CD8-positive, alpha-beta T cell (primary cell): ENCODE measurements at regions of chr9 and their contacts with region 1.

Region 1: DNA sequence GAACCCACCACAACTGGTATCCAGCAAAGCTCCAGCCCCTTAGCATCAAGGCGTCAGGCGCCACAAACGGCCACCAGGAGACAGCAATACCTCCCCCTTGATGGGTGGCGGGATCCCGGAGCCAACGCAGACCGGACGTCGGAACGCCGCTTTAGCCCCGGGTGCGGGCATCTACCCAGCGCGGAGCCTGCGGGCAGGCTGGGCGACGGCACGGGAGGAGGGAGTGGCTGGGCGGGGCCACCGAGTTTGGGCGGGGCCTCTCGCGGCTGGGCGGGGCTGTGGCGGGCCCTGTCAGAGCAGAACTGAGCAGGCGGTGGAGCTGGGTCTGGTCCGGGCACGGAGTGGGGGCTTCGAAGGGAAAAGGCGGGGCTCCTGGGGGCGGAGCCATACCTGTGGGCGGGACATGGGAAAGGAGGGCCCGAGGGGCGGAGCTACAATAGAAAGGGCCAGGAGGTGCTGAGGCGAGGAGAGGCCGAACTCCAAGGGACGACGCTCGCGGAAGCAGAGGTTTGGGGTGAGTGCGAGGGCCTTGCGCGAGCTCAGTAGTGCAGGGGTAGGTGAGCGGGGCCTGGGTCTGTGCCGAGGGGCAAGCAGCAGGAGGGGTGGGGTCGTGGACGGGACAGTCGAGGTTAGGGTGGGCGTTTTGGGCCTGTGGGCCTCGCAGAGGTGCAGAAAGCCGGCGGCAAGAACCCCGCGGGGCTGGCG is 40.2 kb upstream of the GARNL3 start:
- DNase-seq: peak; percentile 75 to 91 (median 89)
- ATAC-seq: peak; percentile 82
- H3K4me3 ChIP-seq: peak overlapping the region; percentile 66 to 72
- H3K4me3 Mint-ChIP-seq: peak overlapping the region; percentile 82
- H3K27ac ChIP-seq: peak overlapping the region in 1 of 2 experiments; percentile 53
- H3K27ac Mint-ChIP-seq: peak overlapping the region; percentile 77
- H3K4me1 ChIP-seq: peaks cover 33% of the 10 kb centered on the region
- H3K4me1 Mint-ChIP-seq: peaks cover 42% of the 10 kb centered on the region
- H3K27me3 ChIP-seq: no peaks in the 10 kb centered on the region
- H3K27me3 Mint-ChIP-seq: peaks cover 2% of the 10 kb centered on the region
- CTCF ChIP-seq: no peak

Region 2: DNA sequence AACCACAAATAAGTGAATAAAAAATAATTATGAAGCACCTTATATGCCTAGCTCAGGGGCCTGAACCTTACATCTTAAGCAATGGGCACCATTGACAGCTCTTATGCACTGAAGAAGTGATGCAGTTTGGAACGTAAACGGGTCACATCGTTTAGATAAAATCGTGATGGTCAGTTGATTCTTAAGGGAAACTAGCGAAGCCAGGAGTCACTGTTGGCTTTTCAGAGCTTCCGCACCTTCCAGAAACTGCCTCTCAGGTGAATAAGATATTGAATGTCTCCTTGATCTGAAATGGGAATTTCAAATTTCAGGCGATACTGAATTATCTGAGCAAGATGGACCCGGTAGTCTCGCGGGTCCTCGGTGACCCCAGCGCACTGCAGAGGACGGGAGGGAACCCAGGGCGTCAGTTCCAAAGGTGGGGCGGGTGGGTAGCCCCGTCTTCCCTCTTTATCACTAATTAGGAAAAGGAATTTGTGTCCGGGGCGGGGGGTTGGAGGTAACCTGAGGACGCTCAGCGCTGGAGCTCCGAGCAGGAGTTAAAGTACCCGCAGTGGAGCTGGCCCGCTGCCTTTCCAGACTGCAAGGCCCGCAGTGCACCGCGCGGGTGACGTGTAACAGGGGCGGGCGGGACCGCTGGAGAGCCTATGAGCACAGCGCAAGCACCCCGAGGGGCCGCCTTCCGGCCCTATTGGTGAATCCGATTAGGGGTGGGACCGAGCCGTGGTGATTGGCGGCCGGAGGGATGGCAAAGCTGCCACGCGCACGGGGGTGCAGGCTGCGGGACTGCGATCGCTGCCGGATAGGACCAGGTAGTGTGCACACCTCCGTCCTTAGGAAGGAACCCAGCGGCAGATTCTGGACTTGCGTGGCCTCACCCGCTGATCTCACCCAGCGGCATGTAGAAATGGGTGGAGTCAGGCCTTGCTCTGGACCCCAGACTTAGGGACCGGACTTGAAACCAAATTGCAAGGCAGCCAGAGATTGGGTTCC is 20.6 kb after region 1 on chr9:
- CTCF ChIA-PET with region 1: interaction called, 3 read pairs
- POLR2A ChIA-PET with region 1: interaction called, 3 read pairs
- intact Hi-C with region 1: loop called (anchors 1 kb)
- DNase-seq: peak; percentile 88 to 96 (median 94)
- ATAC-seq: peak; percentile 100
- H3K4me3 ChIP-seq: peak overlapping the region; percentile 57 to 76
- H3K4me3 Mint-ChIP-seq: peak overlapping the region; percentile 86
- H3K27ac ChIP-seq: peak overlapping the region in 1 of 2 experiments; percentile 12
- H3K27ac Mint-ChIP-seq: no peak overlapping the region
- H3K4me1 ChIP-seq: peaks cover 6% of the 10 kb centered on the region
- H3K4me1 Mint-ChIP-seq: peaks cover 15% of the 10 kb centered on the region
- H3K27me3 ChIP-seq: no peaks in the 10 kb centered on the region
- H3K27me3 Mint-ChIP-seq: peaks cover 7% of the 10 kb centered on the region
- CTCF ChIP-seq: no peak

Region 3: DNA sequence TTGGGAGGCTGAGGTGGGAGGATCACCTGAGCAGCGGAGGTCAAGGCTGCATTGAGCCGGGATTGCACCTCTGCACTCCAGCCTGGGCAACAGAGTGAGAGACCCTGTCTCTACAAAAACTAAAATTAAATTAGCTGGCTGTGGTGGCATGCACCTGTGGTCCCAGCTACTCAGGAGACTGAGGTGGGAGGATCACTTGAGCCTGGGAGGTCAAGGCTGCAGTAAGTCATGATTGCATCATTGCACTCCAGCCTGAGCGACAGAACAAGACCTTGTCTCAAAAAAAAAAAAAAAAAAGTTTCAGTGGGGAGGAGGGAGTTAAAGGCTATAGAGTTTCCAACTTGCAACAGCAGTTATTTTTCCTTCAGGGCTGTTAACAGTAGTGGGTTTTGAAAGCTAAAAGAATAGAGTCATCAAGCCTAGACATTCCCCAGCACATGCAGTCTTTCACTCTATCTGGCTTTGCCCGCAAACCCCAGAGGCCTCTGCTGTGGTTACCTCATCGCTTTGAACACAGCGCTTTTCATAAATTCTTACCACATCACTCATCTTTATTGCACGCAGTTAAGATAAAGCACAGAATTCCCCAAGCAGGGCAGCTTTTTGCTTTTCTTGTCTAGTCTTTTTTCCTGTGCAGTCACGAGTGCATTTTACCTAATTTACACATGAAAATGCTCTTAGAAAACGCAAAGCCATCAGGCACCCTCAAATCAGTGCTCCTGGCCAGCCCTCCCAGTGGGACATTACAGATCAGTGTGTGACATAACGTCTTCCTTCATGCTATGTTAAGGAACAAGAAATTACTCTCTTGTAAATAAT is 163.9 kb after region 1 on chr9:
- CTCF ChIA-PET with region 1: no interaction called
- POLR2A ChIA-PET with region 1: no interaction called
- intact Hi-C with region 1: loop called in 1 of 2 experiments (anchors 2 kb)
- DNase-seq: peak; percentile 73 to 96 (median 84)
- ATAC-seq: peak; percentile 97
- H3K4me3 ChIP-seq: no peak overlapping the region
- H3K4me3 Mint-ChIP-seq: peak overlapping the region; percentile 4
- H3K27ac ChIP-seq: no peak overlapping the region
- H3K27ac Mint-ChIP-seq: peak overlapping the region; percentile 7
- H3K4me1 ChIP-seq: peaks cover 18% of the 10 kb centered on the region
- H3K4me1 Mint-ChIP-seq: peaks cover 26% of the 10 kb centered on the region
- H3K27me3 ChIP-seq: peaks cover 28 to 61% of the 10 kb centered on the region in 2 experiments
- H3K27me3 Mint-ChIP-seq: peaks cover 66% of the 10 kb centered on the region
- CTCF ChIP-seq: no peak

Region 4: GRCh38 chr9:127611899-127612790 is 387.8 kb after region 1 on chr9 and contains the start of gene STXBP1:
- CTCF ChIA-PET with region 1: no interaction called
- POLR2A ChIA-PET with region 1: no interaction called
- intact Hi-C with region 1: loop called in 1 of 2 experiments (anchors 10 kb)
- DNase-seq: peak; percentile 70 to 92 (median 83)
- ATAC-seq: peak; percentile 80
- H3K4me3 ChIP-seq: peak within 1 kb of the TSS; percentile 59 to 82
- H3K4me3 Mint-ChIP-seq: peak within 1 kb of the TSS; percentile 93
- H3K27ac ChIP-seq: peak within 1 kb of the TSS in 1 of 2 experiments; percentile 42
- H3K27ac Mint-ChIP-seq: peak within 1 kb of the TSS; percentile 92
- H3K4me1 ChIP-seq: peaks cover 32% of the 10 kb centered on the region
- H3K4me1 Mint-ChIP-seq: peaks cover 36% of the 10 kb centered on the region
- H3K27me3 ChIP-seq: peaks cover 4 to 9% of the 10 kb centered on the region in 2 experiments
- H3K27me3 Mint-ChIP-seq: peaks cover 9% of the 10 kb centered on the region
- CTCF ChIP-seq: no peak
- total RNA-seq, gene STXBP1: 7.7 to 8.9 TPM